ENCODE measurements at regions of chr17 and their contacts with region 1.

Region 1: DNA sequence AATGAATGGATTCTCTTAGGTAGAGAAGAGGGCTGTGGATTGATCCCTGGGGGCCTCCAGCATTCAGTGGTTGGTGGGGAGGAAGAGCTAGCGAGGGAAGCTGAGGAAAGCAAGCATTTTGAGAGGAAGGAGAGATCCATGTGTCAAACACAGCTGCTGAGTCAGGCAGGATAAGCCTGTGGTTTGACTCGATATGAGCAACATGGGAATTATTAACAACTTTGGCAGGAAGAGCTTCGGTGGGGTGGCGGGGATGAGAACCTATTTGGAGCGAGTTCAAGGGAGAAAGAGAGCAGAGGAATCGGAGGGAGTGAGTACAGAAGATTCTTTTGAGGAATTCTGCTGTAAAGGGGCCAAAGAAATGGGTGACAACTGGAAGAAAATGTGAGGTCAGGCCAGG is 59.5 kb upstream of the CDC42EP4 start:
- DNase-seq: no peak
- H3K4me3 ChIP-seq: no peak overlapping the region
- H3K27ac ChIP-seq: no peak overlapping the region
- H3K4me1 ChIP-seq: no peaks in the 10 kb centered on the region
- H3K27me3 ChIP-seq: no peaks in the 10 kb centered on the region
- CTCF ChIP-seq: no peak
- EP300 ChIP-seq: no peak
- POLR2A ChIP-seq: no peak

Region 2: DNA sequence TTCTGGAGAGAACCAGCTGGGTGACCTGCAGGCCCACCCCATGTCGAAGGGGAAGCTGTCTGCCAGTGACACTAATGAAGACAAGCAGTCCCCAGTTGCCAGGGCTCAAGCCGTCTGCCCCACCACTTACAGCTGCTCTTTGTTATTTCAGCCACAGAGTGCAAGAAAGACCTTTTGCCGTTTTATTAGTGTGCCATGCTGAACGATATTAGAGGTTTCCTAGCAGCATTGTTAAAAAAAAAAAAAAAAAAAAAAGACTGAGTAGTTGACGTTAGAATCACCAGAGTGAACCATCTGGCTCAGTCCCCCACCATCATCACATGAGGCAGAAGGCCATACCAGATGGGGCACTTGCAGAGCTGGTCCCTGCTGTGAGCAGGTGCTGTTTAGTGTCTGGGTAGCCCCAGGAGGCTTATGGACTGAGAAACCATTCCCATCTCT is 252.3 kb before region 1 on chr17:
- in situ Hi-C with region 1: no loop called
- intact Hi-C with region 1: no loop called
- DNase-seq: no peak
- H3K4me3 ChIP-seq: no peak overlapping the region
- H3K27ac ChIP-seq: no peak overlapping the region
- H3K4me1 ChIP-seq: no peaks in the 10 kb centered on the region
- H3K27me3 ChIP-seq: no peaks in the 10 kb centered on the region
- CTCF ChIP-seq: no peak
- EP300 ChIP-seq: no peak
- POLR2A ChIP-seq: no peak

Region 3: GRCh38 chr17:73249700-73250099 is 121.6 kb before region 1 on chr17:
- in situ Hi-C with region 1: loop called in 3 of 4 experiments (anchors 5 kb)
- intact Hi-C with region 1: no loop called
- DNase-seq: no peak
- H3K4me3 ChIP-seq: no peak overlapping the region
- H3K27ac ChIP-seq: no peak overlapping the region
- H3K4me1 ChIP-seq: no peaks in the 10 kb centered on the region
- H3K27me3 ChIP-seq: no peaks in the 10 kb centered on the region
- CTCF ChIP-seq: no peak
- EP300 ChIP-seq: no peak
- POLR2A ChIP-seq: no peak

Region 4: DNA sequence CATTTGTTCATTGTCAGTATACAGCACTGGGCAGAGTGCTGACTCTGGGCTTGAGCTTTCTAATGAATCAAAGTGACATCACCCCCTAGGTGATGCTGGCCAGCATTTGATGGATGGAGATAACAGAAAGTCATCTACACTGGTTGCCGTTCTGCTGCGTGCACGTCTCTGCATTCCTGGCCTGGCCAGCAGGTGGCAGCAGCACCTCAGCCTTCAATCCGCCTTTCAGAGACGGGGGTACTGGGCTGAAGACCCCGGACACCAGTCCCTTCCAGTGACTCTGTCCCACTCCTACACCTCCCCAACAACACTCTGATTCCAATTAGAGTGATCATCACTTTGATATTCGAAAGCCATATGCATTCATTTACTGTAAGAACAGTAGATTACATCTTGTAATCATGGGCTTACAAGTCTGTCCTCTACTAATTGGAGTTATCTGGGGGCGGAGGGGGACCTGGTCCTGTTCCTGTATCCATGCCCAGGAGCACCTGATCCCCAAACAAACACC is 115.6 kb before region 1 on chr17:
- in situ Hi-C with region 1: loop called (anchors 5 kb)
- intact Hi-C with region 1: loop called (anchors 1 kb)
- DNase-seq: peak; percentile 59
- H3K4me3 ChIP-seq: no peak overlapping the region
- H3K27ac ChIP-seq: no peak overlapping the region
- H3K4me1 ChIP-seq: no peaks in the 10 kb centered on the region
- H3K27me3 ChIP-seq: no peaks in the 10 kb centered on the region
- CTCF ChIP-seq: peak; percentile 98 to 99 (median 98)
- EP300 ChIP-seq: no peak
- POLR2A ChIP-seq: no peak

Region 5: DNA sequence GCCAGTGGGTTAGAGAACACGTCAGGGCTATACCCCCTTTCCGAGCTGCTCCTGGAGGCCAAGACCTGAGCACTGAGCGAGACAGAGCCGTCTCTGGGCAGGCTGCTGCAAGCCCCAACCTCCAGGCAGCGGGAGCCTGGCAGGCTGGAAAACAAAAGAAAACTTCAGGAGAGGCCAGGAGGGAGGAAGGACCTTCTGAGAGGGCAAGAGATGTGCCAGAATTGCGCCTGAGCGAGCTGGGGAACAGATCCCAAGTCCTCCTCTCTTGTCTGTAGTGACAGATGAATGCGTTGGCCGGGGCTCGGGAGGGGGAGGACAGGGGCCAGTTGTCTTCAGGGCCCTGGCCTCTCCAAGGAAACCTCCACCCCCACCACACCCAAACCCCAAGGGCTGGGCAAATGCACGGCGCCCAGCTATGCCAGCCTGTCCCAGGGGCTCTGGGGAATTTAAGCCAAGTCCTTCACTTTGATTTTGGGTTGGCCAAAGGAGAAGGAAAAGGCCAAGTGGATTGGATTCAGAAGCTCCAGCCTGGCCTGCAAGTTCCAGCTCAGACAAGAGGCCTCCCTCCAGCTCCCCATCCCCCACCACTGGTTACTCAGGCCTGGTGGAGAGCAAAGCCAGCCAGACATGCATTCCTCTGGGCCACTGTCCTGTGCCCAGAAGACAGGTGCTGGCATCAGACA is 254.8 kb after region 1 on chr17:
- in situ Hi-C with region 1: no loop called
- intact Hi-C with region 1: no loop called
- DNase-seq: no peak
- H3K4me3 ChIP-seq: no peak overlapping the region
- H3K27ac ChIP-seq: no peak overlapping the region
- H3K4me1 ChIP-seq: no peaks in the 10 kb centered on the region
- H3K27me3 ChIP-seq: no peaks in the 10 kb centered on the region
- CTCF ChIP-seq: no peak
- EP300 ChIP-seq: no peak
- POLR2A ChIP-seq: no peak

Measured in transverse colon (tissue), 4 donors.